ENCODE measurements at regions of chr6 and their contacts with region 1.

Region 1: DNA sequence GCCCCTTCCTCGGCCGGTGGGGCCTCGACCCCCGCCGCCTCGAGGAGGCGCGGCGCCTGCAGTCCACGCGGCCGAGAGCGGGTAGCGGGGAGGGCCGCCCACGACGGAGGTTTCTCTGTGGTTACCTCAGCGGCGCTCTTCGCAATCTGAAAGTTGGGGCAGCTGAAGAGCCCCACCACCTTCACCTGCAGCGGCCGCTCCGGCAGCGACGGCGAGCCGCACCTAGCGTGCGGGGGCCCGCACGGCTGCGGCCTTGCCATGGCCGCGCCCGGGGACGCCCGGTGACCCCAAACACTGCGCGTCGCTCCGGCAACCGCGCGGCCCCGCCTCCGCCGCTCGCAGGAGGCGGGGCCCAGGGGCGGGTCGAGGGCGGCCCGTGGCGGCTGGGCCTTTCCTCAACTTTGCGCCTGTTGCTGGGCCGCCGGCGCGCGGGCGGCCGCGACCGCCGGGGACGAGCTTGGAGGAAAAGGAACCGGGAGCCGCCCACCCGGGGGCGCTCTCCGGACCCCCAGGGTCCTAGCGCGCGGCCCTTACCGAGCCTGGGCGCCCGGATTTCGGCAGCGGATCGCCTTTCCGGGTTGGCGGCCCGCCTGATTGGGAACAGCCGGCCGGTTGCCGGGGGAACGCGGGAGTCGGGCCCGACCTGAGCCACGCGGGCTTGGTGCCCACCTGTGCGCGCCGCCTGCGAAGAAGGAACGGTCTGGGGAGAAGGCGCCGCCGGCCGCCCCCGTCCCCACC is at the starts of genes PPIL6 and SMPD2:
- DNase-seq: peak; percentile 81
- ATAC-seq: peak; percentile 81
- H3K4me3 ChIP-seq: peak within 1 kb of the TSS; percentile 84
- H3K27ac ChIP-seq: peak within 1 kb of the TSS; percentile 36
- H3K4me1 ChIP-seq: peaks cover 14% of the 10 kb centered on the region; the same call in 1 of the 2 replicates
- H3K27me3 ChIP-seq: no peaks in the 10 kb centered on the region
- CTCF ChIP-seq: no peak; the same call in 1 of the 2 replicates
- total RNA-seq, gene PPIL6: 0.62 and 2.1 TPM in 2 replicates
- total RNA-seq, gene SMPD2: 12.6 and 13.8 TPM in 2 replicates

Region 2: GRCh38 chr6:109455502-109456282 is 15.2 kb after region 1 on chr6 and contains the start of gene MICAL1:
- CTCF ChIA-PET with region 1: no interaction called
- POLR2A ChIA-PET with region 1: no interaction called
- intact Hi-C with region 1: loop called (anchors 1 kb)
- DNase-seq: peak; percentile 47
- ATAC-seq: peak; percentile 60
- H3K4me3 ChIP-seq: peak within 1 kb of the TSS; percentile 84
- H3K27ac ChIP-seq: peak within 1 kb of the TSS; percentile 48; the same call in 1 of the 2 replicates
- H3K4me1 ChIP-seq: peaks cover 18% of the 10 kb centered on the region; the same call in 1 of the 2 replicates
- H3K27me3 ChIP-seq: no peaks in the 10 kb centered on the region
- CTCF ChIP-seq: no peak
- total RNA-seq, gene MICAL1: 9.1 and 17.9 TPM in 2 replicates

Measured in PC-3 (cell line).